Posterior vena cava (tissue), 2 donors: ENCODE measurements at regions of chr14 and their contacts with region 1.

Region 1: DNA sequence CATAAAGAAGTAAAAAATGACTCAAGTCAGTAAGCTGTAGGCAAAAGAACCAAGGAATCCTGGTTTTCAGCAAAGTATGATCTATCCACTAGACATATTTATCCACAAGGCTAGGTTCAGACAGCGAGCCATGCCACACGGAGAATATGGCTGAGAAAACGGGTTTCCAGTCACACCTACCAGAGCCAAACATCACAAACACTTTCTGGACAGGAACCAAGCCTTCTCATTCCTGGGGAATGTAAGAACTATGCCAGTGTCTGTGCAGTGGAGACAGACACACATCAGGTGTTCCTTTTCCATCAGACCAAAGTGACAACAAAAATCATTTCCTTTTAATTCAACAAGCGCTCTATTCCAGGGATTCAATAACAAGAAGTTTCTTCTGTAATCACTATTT is 41.1 kb downstream of the AREL1 start:
- DNase-seq: no peak

Region 2: DNA sequence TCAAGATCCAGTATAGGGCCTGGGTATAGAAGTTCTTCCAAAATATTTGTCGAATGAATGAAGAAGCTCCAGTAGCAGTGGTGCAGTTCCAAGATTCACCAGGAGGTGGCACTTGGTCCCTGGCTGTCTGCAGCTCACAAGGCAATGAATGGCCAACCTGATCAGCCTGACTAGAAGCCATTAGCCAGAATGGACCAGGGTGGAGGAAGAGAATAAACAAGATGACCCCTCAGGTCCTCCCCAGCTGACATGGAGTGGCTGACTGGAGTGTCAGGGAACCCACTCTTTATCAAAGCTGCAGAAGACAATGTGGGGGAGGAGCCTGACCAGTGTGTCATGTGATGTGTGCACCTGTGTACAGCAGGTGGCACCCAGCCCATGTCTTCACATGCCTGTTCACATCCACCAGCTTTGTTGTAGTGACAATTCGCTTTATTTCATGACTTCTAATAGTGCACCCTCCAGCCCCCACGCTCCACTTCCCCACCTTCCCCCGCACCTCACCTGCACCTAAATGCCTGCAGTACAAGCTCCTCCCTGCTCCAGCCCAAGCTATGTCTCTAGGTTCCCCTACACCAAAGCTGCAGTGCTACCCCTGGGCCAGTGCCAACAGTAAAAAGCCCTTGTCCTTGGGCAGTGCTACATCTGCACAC is 62.7 kb before region 1 on chr14:
- intact Hi-C with region 1: no loop called
- DNase-seq: peak; percentile 94

Region 3: GRCh38 chr14:74685921-74686678 is 14.3 kb after region 1 on chr14:
- intact Hi-C with region 1: no loop called
- DNase-seq: no peak

Region 4: GRCh38 chr14:74735125-74735524 is 63.3 kb after region 1 on chr14:
- intact Hi-C with region 1: loop called in 1 of 2 experiments (anchors 2 kb)
- DNase-seq: no peak

Region 5: DNA sequence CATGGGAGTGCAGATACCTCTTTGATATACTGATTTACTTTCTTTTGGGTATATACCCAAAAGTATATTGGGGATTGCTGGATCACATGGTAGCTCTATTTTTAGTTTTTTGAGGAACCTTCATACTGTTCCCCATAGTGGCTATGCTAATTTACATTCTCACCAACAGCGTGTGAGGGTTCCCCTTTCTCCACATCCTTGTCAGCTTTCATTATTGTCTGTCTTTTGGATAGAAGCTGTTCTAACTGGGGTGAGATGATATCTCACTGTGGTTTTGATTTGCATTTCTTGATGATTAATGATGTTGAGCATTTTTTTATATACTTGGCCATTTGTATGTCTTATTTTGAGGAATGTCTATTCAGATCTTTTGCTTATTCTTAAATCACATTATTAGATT is 711.9 kb after region 1 on chr14:
- intact Hi-C with region 1: no loop called
- DNase-seq: no peak